ENCODE measurements at regions of chr1 and their contacts with region 1.

Region 1: GRCh38 chr1:66242646-66243547 is 291.1 kb upstream of the SGIP1 start:
- DNase-seq: peak; percentile 64
- H3K4me3 Mint-ChIP-seq: no peak overlapping the region
- H3K27ac Mint-ChIP-seq: no peak overlapping the region
- H3K4me1 Mint-ChIP-seq: peaks cover 28% of the 10 kb centered on the region
- H3K27me3 Mint-ChIP-seq: peaks cover 6% of the 10 kb centered on the region

Region 2: GRCh38 chr1:65230731-65231481 is 1012.0 kb before region 1 on chr1:
- intact Hi-C with region 1: loop called (anchors 2 kb)
- DNase-seq: no peak
- H3K4me3 Mint-ChIP-seq: no peak overlapping the region
- H3K27ac Mint-ChIP-seq: peak overlapping the region; percentile 81
- H3K4me1 Mint-ChIP-seq: peaks cover 32% of the 10 kb centered on the region
- H3K27me3 Mint-ChIP-seq: no peaks in the 10 kb centered on the region

Region 3: DNA sequence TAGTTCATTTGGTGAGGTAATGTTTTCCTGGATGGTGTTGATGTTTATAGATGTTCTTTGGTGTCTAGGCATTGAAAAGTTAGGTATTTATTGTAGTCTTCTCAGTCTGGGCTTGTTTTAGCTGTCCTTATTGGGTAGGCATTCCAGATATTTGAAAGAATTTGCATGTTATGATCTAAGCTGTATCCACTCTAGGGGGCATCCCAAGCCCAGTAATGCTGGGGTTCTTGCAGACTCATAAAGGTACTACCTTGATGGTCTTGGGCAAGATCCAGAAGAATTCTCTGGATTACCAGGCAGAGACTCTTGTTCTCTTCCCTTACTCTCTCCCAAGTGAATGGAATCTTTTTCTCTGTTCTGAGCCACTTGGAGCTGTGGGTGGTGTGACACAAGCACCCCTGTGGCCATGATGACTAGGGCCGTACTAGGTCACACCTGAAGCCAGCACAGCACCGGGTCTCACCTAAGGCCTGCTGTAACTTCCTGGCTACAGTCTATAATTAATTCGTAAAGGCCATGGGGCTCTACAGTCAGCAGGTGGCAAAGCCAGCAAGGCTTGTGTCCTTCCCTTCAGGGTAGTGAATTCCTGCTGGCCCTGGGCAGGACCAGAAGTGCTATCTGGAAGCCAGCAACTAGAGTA is 525.0 kb before region 1 on chr1:
- intact Hi-C with region 1: loop called (anchors 1 kb)
- DNase-seq: no peak
- H3K4me3 Mint-ChIP-seq: no peak overlapping the region
- H3K27ac Mint-ChIP-seq: no peak overlapping the region
- H3K4me1 Mint-ChIP-seq: no peaks in the 10 kb centered on the region
- H3K27me3 Mint-ChIP-seq: peaks cover 29% of the 10 kb centered on the region

Region 4: DNA sequence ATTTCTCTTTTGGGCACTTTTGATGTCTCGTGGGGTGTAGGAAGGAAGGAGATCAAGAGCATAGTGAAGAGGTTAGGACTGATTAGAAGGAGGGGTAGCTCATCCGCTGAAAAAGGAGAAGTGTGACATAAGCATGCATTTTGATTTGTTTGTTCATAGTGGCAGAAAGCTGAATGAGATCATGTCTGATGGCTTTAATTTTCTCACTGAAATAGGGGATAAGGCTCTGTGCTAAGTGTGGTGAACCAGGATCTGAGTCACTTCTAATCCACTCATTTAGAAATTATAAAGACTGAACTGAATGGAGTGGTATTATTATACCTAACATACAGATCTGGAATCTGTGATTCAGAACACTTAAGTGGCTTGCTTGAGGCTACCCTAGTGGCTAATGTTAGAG is 105.7 kb before region 1 on chr1:
- intact Hi-C with region 1: loop called (anchors 5 kb)
- DNase-seq: no peak
- H3K4me3 Mint-ChIP-seq: no peak overlapping the region
- H3K27ac Mint-ChIP-seq: no peak overlapping the region
- H3K4me1 Mint-ChIP-seq: no peaks in the 10 kb centered on the region
- H3K27me3 Mint-ChIP-seq: no peaks in the 10 kb centered on the region

Region 5: GRCh38 chr1:66168948-66169671 is 73.8 kb before region 1 on chr1:
- intact Hi-C with region 1: no loop called
- DNase-seq: no peak
- H3K4me3 Mint-ChIP-seq: peak overlapping the region; percentile 13
- H3K27ac Mint-ChIP-seq: no peak overlapping the region
- H3K4me1 Mint-ChIP-seq: peaks cover 29% of the 10 kb centered on the region
- H3K27me3 Mint-ChIP-seq: peaks cover 10% of the 10 kb centered on the region

Region 6: DNA sequence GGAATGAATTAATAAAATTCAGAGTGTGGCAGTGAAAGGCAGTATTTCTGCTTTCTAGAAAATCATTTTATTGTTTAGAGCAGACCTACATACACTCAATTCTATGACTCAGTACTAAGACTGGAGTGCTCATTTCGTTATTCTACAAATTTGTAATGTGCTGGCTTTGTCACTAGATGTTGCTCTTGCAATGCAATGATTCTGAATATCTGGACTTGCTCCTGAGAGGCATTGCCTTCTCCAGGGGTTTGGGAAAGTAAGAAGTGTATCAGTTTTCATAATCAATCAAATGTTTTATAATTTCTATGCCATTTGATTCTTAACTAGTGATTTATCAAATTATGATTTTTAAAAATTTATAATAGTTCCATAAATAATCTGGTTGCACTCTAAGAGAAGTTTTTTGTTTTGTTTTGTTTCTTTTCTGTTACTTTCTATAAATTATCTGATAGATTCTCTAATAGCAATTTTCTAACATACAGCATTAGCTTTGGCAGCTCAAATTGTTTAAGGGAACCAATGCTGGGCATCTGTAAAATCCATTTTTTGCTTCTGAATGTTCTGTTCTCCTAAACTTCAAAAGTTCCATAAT is 10.5 kb after region 1 on chr1:
- intact Hi-C with region 1: no loop called
- DNase-seq: no peak
- H3K4me3 Mint-ChIP-seq: no peak overlapping the region
- H3K27ac Mint-ChIP-seq: no peak overlapping the region
- H3K4me1 Mint-ChIP-seq: peaks cover 68% of the 10 kb centered on the region
- H3K27me3 Mint-ChIP-seq: no peaks in the 10 kb centered on the region

Region 7: DNA sequence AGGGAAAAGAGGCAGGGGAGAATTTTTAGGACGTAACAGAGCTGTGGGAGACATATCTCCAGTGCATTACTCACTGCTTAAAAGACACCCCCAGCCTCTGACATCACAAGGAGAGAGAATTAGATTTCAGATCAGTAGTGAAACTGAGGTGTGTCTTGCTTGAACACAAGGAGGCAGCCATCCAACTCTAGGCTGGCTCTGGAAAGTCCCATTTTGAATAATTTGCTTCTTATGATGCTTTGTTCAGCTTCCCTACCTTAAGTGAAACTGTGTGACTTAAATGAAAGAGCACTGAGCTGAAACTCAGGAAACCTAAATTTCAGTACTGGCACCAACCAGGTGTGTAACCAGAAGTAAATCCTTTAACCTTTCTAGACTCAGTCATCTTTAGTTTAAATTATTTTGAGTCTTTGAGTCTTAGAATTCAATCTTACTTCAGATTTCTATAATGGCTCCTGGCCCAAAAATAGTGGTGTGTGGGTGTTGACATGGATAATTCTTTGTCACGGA is 39.5 kb after region 1 on chr1:
- intact Hi-C with region 1: loop called (anchors 1 kb)
- DNase-seq: peak; percentile 73
- H3K4me3 Mint-ChIP-seq: peak overlapping the region; percentile 62
- H3K27ac Mint-ChIP-seq: peak overlapping the region; percentile 88
- H3K4me1 Mint-ChIP-seq: peaks cover 90% of the 10 kb centered on the region
- H3K27me3 Mint-ChIP-seq: no peaks in the 10 kb centered on the region

Region 8: GRCh38 chr1:66503841-66504470 is 261.1 kb after region 1 on chr1:
- intact Hi-C with region 1: loop called (anchors 2 kb)
- DNase-seq: no peak
- H3K4me3 Mint-ChIP-seq: no peak overlapping the region
- H3K27ac Mint-ChIP-seq: no peak overlapping the region
- H3K4me1 Mint-ChIP-seq: no peaks in the 10 kb centered on the region
- H3K27me3 Mint-ChIP-seq: peaks cover 31% of the 10 kb centered on the region